Activated CD4-positive, alpha-beta T cell treated with anti-CD3 and anti-CD28 coated beads, Interleukin-2, amount 10 ng/mL, durations not matched to agents 24 days and 14 days (primary cell): ENCODE measurements at regions of chr12 and their contacts with region 1.

Region 1: GRCh38 chr12:12505544-12506495 is 56.8 kb downstream of the DUSP16 start:
- DNase-seq: peak; percentile 78
- H3K4me3 Mint-ChIP-seq: peak overlapping the region; percentile 64
- H3K27ac Mint-ChIP-seq: peak overlapping the region; percentile 94
- H3K4me1 Mint-ChIP-seq: peaks cover 63% of the 10 kb centered on the region
- H3K27me3 Mint-ChIP-seq: peaks cover 1% of the 10 kb centered on the region

Region 2: DNA sequence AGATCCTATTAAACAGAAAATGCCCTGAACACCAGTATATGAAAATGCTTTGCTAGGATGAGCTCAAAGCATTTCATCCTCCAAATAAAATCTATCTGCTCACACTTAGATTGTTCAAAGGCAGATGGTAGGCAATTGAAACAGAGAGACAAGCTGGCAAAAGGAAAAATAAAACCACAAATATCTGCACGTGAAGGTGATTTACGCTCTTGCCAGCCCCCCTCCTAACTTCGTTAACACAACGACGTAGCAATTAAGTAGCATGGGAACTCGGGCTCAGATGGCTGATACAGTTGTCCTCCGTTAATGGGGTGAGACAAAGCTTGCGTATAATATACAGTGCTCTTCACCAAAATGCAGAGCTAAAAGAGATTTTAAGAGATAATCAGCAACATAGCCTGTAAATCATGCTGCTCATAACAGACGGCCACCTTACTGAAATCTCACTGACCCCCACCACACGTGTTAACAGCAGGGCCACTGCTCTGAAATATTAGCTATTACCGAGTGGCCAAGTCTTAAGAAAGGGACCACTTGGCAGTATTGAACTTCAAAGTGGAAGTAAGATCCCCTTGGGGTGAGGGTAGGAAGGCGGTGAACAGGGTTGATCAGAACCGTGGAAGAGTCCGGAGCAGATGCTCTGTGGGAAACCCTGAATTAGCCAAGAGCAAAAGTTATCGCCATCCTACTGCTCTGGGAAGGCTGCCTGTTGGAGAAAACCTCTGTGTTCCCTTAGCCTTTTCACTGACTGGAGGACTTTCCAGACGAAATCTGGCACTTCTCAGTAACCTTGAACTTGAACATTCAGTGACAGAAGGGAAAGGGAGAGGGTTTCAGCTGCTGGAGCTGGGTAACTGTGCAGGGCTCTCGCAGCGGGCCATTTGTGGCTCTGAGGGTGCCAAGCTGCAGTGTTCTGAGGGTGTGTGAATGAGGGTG is 833.3 kb before region 1 on chr12:
- intact Hi-C with region 1: no loop called
- DNase-seq: no peak
- H3K4me3 Mint-ChIP-seq: no peak overlapping the region
- H3K27ac Mint-ChIP-seq: peak overlapping the region; percentile 16
- H3K4me1 Mint-ChIP-seq: peaks cover 51% of the 10 kb centered on the region
- H3K27me3 Mint-ChIP-seq: no peaks in the 10 kb centered on the region

Region 3: GRCh38 chr12:12376646-12377448 is 129.0 kb before region 1 on chr12:
- intact Hi-C with region 1: loop called (anchors 2 kb)
- DNase-seq: peak; percentile 79
- H3K4me3 Mint-ChIP-seq: no peak overlapping the region
- H3K27ac Mint-ChIP-seq: peak overlapping the region; percentile 35
- H3K4me1 Mint-ChIP-seq: peaks cover 23% of the 10 kb centered on the region
- H3K27me3 Mint-ChIP-seq: no peaks in the 10 kb centered on the region

Region 4: DNA sequence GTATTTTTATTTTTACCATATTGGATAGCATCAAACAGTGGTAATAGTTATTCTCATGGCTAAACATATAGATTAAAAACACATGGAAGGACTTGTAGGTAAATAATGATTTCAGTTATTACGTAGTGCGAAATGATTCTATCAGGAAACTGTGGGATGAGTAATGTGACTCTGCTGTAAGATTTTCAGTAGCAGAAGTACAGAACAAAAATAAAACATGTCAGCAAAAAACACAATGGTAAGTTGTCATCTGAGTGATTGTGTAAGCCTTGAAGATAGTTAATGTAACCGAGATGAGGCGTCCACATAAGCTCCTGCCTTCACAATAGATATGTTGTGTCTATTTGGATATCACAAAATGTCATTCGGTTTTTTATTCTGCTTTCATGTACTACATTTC is 49.2 kb before region 1 on chr12:
- intact Hi-C with region 1: loop called (anchors 2 kb)
- DNase-seq: no peak
- H3K4me3 Mint-ChIP-seq: peak overlapping the region; percentile 45
- H3K27ac Mint-ChIP-seq: peak overlapping the region; percentile 85
- H3K4me1 Mint-ChIP-seq: peaks cover 41% of the 10 kb centered on the region
- H3K27me3 Mint-ChIP-seq: no peaks in the 10 kb centered on the region

Region 5: DNA sequence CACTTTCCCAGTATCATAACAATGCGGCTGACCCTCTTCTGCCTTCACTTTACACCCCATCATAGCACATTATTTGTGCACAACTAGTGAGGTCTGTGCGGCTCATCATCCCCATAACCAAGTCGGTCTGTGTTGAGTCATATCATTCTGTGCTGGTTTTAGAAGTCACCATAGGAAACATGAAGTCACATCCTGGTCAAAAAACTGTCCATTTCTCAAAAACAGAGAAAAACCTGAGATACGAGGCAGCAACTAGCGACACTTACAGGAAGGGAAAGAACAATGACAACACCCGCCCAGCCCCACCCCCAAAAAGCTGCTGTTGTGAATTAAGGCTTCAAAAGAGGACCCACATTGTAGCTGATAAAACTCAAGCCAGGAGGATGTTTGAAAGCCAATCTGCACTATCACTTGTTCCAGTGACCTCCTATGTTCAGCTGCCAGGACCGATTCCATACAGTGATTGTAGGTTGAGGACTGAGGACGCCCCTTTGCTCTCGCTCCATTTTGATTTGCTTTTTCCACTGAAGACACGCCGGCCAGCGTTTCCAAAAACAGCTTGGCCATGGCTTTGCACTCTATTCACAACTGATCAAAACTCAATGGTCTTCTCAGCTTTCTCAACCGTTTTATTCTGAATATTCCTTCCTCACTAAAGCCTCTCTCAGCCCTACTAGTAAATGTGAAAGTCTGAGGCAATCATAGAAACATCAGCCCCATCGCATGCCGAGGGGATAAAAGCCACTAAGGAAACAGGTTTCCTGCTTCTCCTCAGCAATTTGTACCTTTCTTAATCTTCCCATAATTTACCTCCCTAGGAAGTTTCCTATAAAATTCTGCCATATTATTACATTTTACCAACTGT is 30.7 kb before region 1 on chr12:
- intact Hi-C with region 1: loop called (anchors 1 kb)
- DNase-seq: peak; percentile 90
- H3K4me3 Mint-ChIP-seq: peak overlapping the region; percentile 78
- H3K27ac Mint-ChIP-seq: peak overlapping the region; percentile 100
- H3K4me1 Mint-ChIP-seq: peaks cover 59% of the 10 kb centered on the region
- H3K27me3 Mint-ChIP-seq: no peaks in the 10 kb centered on the region

Region 6: DNA sequence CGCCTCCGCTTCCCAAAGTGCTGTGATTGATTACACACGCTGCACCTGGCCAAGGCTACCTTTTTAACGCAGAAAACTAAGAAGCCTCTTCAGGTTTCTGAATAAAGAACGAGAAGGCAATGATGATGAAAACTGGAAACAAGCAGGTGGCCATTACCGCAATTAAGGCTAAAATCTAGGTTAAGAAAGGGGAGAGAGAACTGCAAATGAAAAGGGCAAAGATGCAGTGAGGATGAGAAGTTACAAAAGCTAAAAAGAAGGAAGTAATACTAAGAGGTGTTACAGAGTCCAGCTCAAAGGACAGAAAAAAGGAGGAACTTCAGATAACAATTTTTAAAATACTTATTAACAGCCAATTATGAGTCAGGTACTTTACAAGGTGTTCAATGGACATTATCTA is 22.9 kb before region 1 on chr12:
- intact Hi-C with region 1: loop called (anchors 2 kb)
- DNase-seq: no peak
- H3K4me3 Mint-ChIP-seq: peak overlapping the region; percentile 83
- H3K27ac Mint-ChIP-seq: peak overlapping the region; percentile 96
- H3K4me1 Mint-ChIP-seq: peaks cover 59% of the 10 kb centered on the region
- H3K27me3 Mint-ChIP-seq: no peaks in the 10 kb centered on the region

Region 7: GRCh38 chr12:12568045-12568444 is 62.2 kb after region 1 on chr12:
- intact Hi-C with region 1: no loop called
- DNase-seq: no peak
- H3K4me3 Mint-ChIP-seq: no peak overlapping the region
- H3K27ac Mint-ChIP-seq: no peak overlapping the region
- H3K4me1 Mint-ChIP-seq: peaks cover 7% of the 10 kb centered on the region
- H3K27me3 Mint-ChIP-seq: peaks cover 2% of the 10 kb centered on the region

Region 8: DNA sequence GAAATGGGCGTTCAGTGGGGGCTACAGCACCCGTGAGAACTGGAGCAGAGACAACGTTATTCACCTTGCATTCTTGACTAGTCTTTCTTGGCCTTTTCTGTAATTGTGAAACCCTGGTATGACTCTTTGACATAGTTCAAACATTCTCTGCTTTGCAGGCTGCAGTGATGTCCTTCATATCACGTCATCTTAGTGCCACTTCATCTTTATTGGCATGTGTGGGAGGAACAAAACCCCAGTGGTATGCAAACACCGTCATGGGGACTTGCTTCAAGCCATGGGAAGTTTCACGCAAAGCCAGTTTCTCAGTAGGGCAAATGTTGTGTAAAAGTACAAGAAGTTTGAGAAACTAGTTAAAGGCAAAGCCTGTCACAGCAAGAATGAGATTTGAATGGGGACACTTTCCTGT is 77.1 kb after region 1 on chr12:
- intact Hi-C with region 1: loop called (anchors 1 kb)
- DNase-seq: peak; percentile 78
- H3K4me3 Mint-ChIP-seq: peak overlapping the region; percentile 15
- H3K27ac Mint-ChIP-seq: peak overlapping the region; percentile 79
- H3K4me1 Mint-ChIP-seq: peaks cover 36% of the 10 kb centered on the region
- H3K27me3 Mint-ChIP-seq: no peaks in the 10 kb centered on the region

Region 9: DNA sequence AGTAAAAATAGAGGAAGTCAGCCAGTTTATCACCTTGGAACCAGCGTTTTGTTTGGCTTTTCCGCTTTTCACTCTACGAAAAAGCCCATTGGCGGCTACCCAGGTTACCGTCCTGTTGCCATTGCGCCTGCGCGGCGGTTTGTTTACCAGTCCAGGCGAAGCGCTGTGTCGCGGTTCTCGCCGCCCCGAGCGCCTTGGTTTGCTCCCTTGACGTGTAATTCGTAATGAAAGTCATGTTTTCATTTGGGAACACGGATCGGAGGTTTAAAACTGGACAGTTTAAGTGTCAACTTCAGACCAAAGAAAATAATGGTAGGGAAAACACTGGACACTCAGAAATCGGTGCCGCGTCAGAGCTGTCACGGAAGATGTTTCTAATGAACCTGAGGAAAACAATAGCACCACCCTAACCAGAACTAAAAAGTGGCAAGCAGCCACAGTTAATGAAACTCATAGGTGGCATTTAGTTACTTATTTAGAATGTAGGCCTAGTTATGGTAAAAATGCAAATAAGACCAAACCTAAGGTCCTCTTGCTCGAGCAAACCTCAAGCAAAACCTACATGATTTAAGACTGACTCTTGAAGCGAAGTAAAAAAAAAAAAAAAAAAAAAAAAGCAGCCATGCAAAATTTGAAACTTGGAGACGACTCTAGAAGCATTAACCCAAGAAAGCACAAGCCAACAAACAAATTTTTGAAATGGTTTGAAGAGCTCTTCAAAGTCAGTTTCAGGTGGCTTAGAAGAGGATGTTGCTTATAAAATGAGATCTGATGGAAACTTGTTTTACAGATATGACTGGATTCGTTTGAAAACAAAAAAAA is 191.0 kb after region 1 on chr12:
- intact Hi-C with region 1: loop called (anchors 1 kb)
- DNase-seq: peak; percentile 98
- H3K4me3 Mint-ChIP-seq: peak overlapping the region; percentile 94
- H3K27ac Mint-ChIP-seq: peak overlapping the region; percentile 99
- H3K4me1 Mint-ChIP-seq: peaks cover 60% of the 10 kb centered on the region
- H3K27me3 Mint-ChIP-seq: no peaks in the 10 kb centered on the region